Activated CD8-positive, alpha-beta T cell treated with anti-CD3 and anti-CD28 coated beads, Interleukin-2, amount 10 ng/mL, durations not matched to agents 7 days and 5 days (primary cell): ENCODE measurements at regions of chr10 and their contacts with region 1.

Region 1: GRCh38 chr10:71771821-71772617 is 1.3 kb downstream of the VSIR start:
- DNase-seq: peak; percentile 58
- ATAC-seq: peak; percentile 7
- H3K4me3 Mint-ChIP-seq: peak overlapping the region; percentile 80
- H3K27ac Mint-ChIP-seq: peak overlapping the region; percentile 89
- H3K4me1 Mint-ChIP-seq: peaks cover 81% of the 10 kb centered on the region
- H3K27me3 Mint-ChIP-seq: no peaks in the 10 kb centered on the region

Region 2: GRCh38 chr10:71613261-71613777 is 158.7 kb before region 1 on chr10:
- CTCF ChIA-PET with region 1: no interaction called
- POLR2A ChIA-PET with region 1: no interaction called
- DNase-seq: no peak
- ATAC-seq: no peak
- H3K4me3 Mint-ChIP-seq: no peak overlapping the region
- H3K27ac Mint-ChIP-seq: no peak overlapping the region
- H3K4me1 Mint-ChIP-seq: no peaks in the 10 kb centered on the region
- H3K27me3 Mint-ChIP-seq: no peaks in the 10 kb centered on the region

Region 3: DNA sequence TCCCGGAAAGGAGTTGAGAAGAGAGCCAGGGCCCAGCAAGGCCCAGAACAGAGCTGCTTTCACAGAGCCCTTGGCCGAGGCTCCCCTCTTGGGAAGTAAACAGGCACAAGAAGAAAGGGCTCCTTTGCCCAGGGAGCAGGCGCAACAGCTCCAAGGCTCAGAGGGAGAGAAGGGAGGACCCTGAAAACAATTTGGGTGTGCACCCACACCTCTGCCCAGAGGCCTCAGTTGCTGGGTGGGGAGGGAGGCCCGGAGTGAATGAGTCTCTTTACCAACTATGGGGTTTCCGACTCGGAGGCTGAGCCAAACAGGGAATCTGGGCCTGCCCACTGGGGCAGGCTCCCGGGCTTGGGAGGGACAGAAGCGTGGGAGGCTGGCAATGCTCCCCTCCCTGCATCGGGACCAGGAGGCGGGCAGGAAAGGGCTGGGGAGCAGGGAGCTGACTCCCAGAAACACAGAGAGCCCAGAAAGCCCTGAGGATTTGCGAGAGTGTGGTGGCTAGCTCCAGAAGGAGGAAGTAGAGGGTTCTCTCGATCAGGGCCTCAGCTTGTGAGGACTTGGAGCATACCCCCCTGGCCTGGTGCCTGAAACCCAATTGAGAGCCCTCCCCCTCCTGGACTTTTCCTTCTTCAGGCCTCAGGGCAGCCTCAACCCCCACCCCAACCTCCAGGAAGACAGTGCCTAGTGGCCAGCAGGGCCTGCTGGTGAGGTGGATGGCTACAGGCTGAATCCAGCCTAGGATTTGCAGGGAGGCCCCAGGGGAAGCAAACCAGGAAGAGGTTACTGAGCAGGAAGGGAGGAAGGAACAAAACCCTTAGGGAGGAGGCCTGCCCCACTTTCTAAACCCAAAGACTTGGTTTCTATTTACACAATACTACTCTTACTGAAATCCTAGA is 58.6 kb before region 1 on chr10:
- CTCF ChIA-PET with region 1: interaction called, 50 read pairs
- POLR2A ChIA-PET with region 1: interaction called, 13 read pairs
- DNase-seq: peak; percentile 50
- ATAC-seq: peak; percentile 72
- H3K4me3 Mint-ChIP-seq: peak overlapping the region; percentile 80
- H3K27ac Mint-ChIP-seq: peak overlapping the region; percentile 99
- H3K4me1 Mint-ChIP-seq: peaks cover 68% of the 10 kb centered on the region
- H3K27me3 Mint-ChIP-seq: no peaks in the 10 kb centered on the region

Region 4: GRCh38 chr10:71748671-71749191 is 23.3 kb before region 1 on chr10:
- CTCF ChIA-PET with region 1: interaction called, 45 read pairs
- POLR2A ChIA-PET with region 1: interaction called, 60 read pairs
- DNase-seq: peak; percentile 94
- ATAC-seq: peak; percentile 83
- H3K4me3 Mint-ChIP-seq: peak overlapping the region; percentile 61
- H3K27ac Mint-ChIP-seq: peak overlapping the region; percentile 93
- H3K4me1 Mint-ChIP-seq: peaks cover 98% of the 10 kb centered on the region
- H3K27me3 Mint-ChIP-seq: no peaks in the 10 kb centered on the region

Region 5: DNA sequence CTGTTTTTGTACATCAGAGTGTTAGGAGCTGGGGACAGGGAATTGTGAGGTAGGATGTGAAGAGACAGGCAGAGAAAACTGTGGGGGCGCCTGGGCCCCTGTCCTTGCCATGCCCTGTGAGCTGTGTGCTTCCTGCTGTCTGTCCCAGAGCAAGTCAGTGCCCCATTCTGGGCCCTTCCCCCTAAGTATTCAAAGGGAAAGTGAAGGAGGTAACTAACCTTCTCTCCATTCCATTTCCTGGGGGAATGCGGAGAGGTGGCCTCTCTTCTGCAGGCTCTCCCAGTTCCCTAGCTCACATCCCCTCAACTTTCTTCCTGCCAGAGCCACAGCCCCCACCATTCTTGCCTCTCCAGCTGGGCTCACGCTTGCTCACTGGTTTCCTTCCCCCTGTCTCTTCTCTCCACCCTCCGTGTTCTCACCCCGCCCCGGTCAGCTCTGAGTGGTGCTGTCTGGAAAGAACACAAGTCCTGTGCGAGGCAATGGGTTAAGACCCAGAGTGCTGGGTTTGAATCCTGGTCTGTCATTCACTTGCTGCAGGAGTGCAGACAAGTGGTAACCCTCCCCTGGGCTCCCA is 11.0 kb after region 1 on chr10:
- CTCF ChIA-PET with region 1: interaction called, 13 read pairs
- POLR2A ChIA-PET with region 1: interaction called, 5 read pairs
- DNase-seq: no peak
- ATAC-seq: no peak
- H3K4me3 Mint-ChIP-seq: no peak overlapping the region
- H3K27ac Mint-ChIP-seq: peak overlapping the region; percentile 11
- H3K4me1 Mint-ChIP-seq: peaks cover 46% of the 10 kb centered on the region
- H3K27me3 Mint-ChIP-seq: peaks cover 4% of the 10 kb centered on the region